SK-N-SH (cell line): ENCODE measurements at regions of chr2 and their contacts with region 1.

Region 1: GRCh38 chr2:1550658-1551316 is 137.5 kb downstream of the TPO start:
- DNase-seq: peak; percentile 96
- H3K4me3 ChIP-seq: peak overlapping the region in 1 of 2 experiments; percentile 25; a peak in 1 of 4 replicates
- H3K27ac ChIP-seq: no peak overlapping the region
- H3K4me1 ChIP-seq: peaks cover 0 to 18% of the 10 kb centered on the region in 2 experiments; a peak in 1 of 4 replicates
- H3K27me3 ChIP-seq: no peaks in the 10 kb centered on the region
- CTCF ChIP-seq: peak; percentile 99
- EP300 ChIP-seq: no peak
- RAD21 ChIP-seq: peak; percentile 73

Region 2: GRCh38 chr2:1115843-1116539 is 434.8 kb before region 1 on chr2:
- CTCF ChIA-PET with region 1: no interaction called
- POLR2A ChIA-PET with region 1: no interaction called
- DNase-seq: no peak
- H3K4me3 ChIP-seq: no peak overlapping the region
- H3K27ac ChIP-seq: no peak overlapping the region
- H3K4me1 ChIP-seq: peaks cover 0 to 9% of the 10 kb centered on the region in 2 experiments; a peak in 1 of 4 replicates
- H3K27me3 ChIP-seq: no peaks in the 10 kb centered on the region
- CTCF ChIP-seq: no peak
- EP300 ChIP-seq: no peak
- RAD21 ChIP-seq: no peak

Region 3: DNA sequence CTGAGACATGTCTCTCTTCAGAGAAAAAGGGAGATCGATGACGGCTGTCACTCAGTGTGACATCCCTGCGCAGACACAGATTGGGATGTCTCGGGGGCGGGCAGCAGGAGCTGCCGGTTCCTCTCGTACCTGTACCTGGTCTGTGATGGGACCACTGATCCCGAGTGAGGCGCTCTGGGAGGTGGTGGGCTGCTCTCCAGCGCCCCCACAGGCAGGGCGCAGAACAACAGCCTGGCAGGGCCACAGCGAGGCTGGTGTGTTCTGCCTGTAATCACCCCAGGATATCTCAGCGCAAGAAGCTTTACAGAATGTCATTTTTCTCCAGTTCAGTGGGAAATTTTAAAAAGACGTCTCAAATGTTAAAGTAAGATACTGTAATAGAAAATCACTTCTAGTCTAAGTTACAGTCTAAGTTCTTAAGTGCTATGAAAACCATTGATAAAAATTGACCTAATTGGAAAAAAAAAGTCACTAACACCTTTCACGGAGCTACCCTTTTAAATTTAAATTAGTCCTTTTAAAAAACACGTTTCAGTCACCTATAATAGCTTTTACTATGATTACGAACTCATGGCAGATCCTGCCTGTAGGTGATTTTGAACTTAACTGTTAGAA is 410.3 kb before region 1 on chr2:
- CTCF ChIA-PET with region 1: interaction called, 15 read pairs
- POLR2A ChIA-PET with region 1: no interaction called
- DNase-seq: peak; percentile 90
- H3K4me3 ChIP-seq: no peak overlapping the region
- H3K27ac ChIP-seq: no peak overlapping the region
- H3K4me1 ChIP-seq: no peaks in the 10 kb centered on the region; a peak in 1 of 4 replicates
- H3K27me3 ChIP-seq: no peaks in the 10 kb centered on the region
- CTCF ChIP-seq: peak; percentile 58
- EP300 ChIP-seq: no peak
- RAD21 ChIP-seq: peak; percentile 65

Region 4: DNA sequence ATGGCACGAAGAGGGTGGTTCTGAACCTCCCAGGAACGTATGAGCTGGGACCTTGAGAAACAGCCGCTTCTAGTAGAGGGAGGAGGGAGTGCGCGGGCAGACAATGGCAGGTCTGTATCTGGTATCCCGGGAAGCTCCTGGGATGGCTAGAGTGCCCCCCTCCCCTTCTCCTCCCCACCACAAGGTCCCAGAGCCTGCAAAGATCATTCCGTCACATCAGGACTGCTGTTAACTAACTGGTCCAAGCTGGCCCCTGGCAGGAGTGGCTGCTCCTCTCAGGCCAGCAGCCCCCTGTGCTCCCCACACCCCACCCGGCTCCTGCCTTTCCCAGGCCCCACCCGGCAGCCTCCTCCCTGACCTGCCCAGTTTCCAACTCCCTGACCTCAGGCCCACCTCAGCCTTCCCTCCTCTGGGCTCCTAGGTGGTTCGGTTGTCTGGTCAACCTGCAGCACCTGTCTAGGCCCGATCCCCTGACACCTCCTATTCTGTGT is 62.6 kb before region 1 on chr2:
- CTCF ChIA-PET with region 1: interaction called, 13 read pairs
- POLR2A ChIA-PET with region 1: no interaction called
- DNase-seq: peak; percentile 27
- H3K4me3 ChIP-seq: no peak overlapping the region
- H3K27ac ChIP-seq: no peak overlapping the region
- H3K4me1 ChIP-seq: no peaks in the 10 kb centered on the region
- H3K27me3 ChIP-seq: no peaks in the 10 kb centered on the region
- CTCF ChIP-seq: no peak
- EP300 ChIP-seq: no peak
- RAD21 ChIP-seq: no peak

Region 5: GRCh38 chr2:1572638-1573037 is 21.9 kb after region 1 on chr2:
- CTCF ChIA-PET with region 1: interaction called, 108 read pairs
- POLR2A ChIA-PET with region 1: no interaction called
- DNase-seq: no peak
- H3K4me3 ChIP-seq: no peak overlapping the region
- H3K27ac ChIP-seq: no peak overlapping the region
- H3K4me1 ChIP-seq: no peaks in the 10 kb centered on the region
- H3K27me3 ChIP-seq: peaks cover 11% of the 10 kb centered on the region; the same call in 1 of the 2 replicates
- CTCF ChIP-seq: no peak
- EP300 ChIP-seq: no peak
- RAD21 ChIP-seq: no peak

Region 6: GRCh38 chr2:1698188-1698945 is 147.6 kb after region 1 on chr2:
- CTCF ChIA-PET with region 1: interaction called, 13 read pairs
- POLR2A ChIA-PET with region 1: no interaction called
- DNase-seq: no peak
- H3K4me3 ChIP-seq: no peak overlapping the region
- H3K27ac ChIP-seq: peak overlapping the region; percentile 15 to 70; a peak in 3 of 4 replicates
- H3K4me1 ChIP-seq: peaks cover 0 to 49% of the 10 kb centered on the region in 2 experiments; a peak in 3 of 4 replicates
- H3K27me3 ChIP-seq: no peaks in the 10 kb centered on the region
- CTCF ChIP-seq: no peak
- EP300 ChIP-seq: no peak
- RAD21 ChIP-seq: no peak

Region 7: DNA sequence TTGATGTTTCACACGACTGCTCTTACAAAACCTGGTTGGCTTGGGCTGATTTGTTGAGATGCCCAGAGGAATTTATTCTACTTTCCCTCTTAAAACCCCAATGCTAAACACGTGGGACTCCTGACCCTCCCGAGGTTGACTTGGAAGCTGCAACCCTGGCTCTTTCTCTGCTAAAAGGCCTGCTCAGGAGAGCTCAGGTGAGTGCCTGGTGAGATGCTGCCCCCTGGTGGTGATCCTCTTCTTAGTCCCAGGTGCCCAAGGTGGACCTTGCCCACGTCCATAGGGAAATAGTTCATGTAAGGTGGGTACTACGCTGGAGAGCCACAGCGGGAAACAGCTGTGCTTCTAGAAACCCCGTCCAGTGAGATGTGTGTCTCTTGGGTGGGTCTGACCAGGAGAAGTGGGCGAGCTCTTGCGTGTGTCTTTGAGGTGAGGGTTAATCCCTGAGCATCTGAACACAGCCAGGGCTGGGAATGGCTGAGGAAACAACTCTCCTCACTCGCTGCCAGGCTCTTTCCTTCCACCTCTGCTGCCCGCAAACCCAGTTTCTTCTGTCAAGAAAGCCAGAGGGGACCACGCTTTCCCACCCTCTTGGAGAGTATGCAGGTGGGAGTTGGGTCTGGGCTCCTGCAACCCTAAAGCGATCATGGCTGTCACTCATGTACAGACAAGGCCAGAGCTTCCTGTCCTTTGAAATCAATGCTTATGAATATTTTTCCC is 219.1 kb after region 1 on chr2:
- CTCF ChIA-PET with region 1: interaction called, 122 read pairs
- POLR2A ChIA-PET with region 1: no interaction called
- DNase-seq: peak; percentile 93
- H3K4me3 ChIP-seq: no peak overlapping the region; a peak in 1 of 4 replicates
- H3K27ac ChIP-seq: no peak overlapping the region
- H3K4me1 ChIP-seq: no peaks in the 10 kb centered on the region; a peak in 1 of 4 replicates
- H3K27me3 ChIP-seq: no peaks in the 10 kb centered on the region
- CTCF ChIP-seq: peak; percentile 94
- EP300 ChIP-seq: no peak
- RAD21 ChIP-seq: peak; percentile 93